Heart right ventricle (tissue), 16 donors: ENCODE measurements at regions of chr19 and their contacts with region 1.

Region 1: DNA sequence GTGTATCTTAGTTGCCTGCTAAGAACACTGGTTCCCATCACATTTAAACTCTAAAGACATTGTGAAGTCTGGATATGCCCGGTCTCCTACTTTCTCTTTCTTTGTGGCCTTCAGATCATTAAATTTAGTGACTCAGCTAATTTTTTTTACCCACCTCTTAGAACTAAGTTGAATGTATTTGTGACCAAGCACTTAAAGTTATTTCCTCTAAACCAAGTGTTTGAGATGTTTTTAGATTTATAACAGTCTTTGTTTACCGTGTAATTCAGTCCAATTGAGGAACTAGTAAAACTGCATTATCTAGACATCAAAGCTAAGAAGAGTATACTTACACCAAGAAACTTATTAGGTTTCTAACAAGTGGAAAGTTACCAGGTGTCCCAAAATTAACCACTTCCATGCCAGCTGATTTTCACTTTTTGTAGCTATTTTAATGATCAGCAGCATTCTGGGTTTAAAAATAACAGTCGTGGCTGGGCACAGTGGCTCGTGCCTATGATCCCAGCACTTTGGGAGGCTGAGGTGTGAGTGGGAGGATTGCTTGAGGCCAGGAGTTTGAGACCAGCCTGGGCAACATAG is 53.1 kb downstream of the ARHGAP35 start:
- DNase-seq: no peak
- ATAC-seq: peak in 1 of 8 donors; percentile 19
- H3K4me3 ChIP-seq: no peak overlapping the region
- H3K27ac ChIP-seq: peak overlapping the region in 8 of 10 donors; percentile 14 to 67 (median 52)
- H3K4me1 ChIP-seq: peaks cover 0 to 70% (median 53%) of the 10 kb centered on the region in 9 donors
- H3K27me3 ChIP-seq: no peaks in the 10 kb centered on the region
- CTCF ChIP-seq: no peak

Region 2: GRCh38 chr19:46866387-46867152 is 47.4 kb before region 1 on chr19:
- intact Hi-C with region 1: loop called in 3 of 10 experiments (anchors 5 to 10 kb)
- DNase-seq: no peak
- ATAC-seq: no peak
- H3K4me3 ChIP-seq: no peak overlapping the region
- H3K27ac ChIP-seq: peak overlapping the region in 8 of 10 donors; percentile 2 to 61 (median 38)
- H3K4me1 ChIP-seq: peaks cover 11 to 87% (median 61%) of the 10 kb centered on the region in 9 donors
- H3K27me3 ChIP-seq: no peaks in the 10 kb centered on the region
- CTCF ChIP-seq: no peak